Dendritic cell treated with granulocyte-macrophage colony-stimulating factor and Interleukin-4, amounts not matched to agents 40 ng/mL and 50 ng/mL, for 4 days (primary cell): ENCODE measurements at regions of chr3 and their contacts with region 1.

Region 1: DNA sequence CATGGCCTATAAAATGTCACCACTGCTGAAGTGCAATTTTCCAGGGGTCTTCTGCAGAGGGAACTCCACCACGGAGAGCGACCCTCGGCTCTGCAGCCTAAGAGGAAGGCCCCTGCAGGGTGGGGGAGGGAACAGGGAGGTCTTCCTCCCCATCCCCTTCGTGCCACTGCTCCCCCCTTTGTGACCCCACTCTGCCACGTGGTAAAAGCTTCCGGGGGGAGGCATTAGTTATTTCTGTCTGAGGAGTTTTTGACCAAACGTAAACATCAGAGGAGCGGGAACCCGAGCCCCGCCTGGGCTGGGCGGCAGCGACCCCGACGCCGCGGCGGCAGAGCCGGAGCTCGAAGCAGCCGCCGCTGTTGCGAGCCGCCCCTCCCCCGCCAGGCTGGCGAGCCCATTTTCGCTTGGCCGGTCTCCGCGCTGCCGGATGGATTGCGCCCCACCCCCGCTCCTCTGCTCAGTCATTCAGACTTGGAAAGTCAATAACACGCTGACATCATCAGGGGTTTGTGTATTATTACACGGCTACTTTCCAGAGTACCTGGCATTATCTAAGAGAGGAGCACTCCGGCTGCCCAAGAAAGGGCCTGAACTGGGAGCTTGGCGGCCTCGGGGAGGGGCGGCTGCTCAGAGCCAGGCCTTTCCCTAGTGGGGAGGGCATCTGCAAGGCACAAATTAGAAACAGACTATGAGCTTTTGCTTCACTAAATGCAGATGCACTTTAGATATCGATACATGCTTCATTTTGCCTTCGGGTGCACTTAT is 162.5 kb upstream of the TBL1XR1 start:
- H3K4me3 Mint-ChIP-seq: peak overlapping the region; percentile 76
- H3K27ac Mint-ChIP-seq: peak overlapping the region; percentile 98
- H3K4me1 Mint-ChIP-seq: peaks cover 64% of the 10 kb centered on the region
- H3K27me3 Mint-ChIP-seq: no peaks in the 10 kb centered on the region

Region 2: DNA sequence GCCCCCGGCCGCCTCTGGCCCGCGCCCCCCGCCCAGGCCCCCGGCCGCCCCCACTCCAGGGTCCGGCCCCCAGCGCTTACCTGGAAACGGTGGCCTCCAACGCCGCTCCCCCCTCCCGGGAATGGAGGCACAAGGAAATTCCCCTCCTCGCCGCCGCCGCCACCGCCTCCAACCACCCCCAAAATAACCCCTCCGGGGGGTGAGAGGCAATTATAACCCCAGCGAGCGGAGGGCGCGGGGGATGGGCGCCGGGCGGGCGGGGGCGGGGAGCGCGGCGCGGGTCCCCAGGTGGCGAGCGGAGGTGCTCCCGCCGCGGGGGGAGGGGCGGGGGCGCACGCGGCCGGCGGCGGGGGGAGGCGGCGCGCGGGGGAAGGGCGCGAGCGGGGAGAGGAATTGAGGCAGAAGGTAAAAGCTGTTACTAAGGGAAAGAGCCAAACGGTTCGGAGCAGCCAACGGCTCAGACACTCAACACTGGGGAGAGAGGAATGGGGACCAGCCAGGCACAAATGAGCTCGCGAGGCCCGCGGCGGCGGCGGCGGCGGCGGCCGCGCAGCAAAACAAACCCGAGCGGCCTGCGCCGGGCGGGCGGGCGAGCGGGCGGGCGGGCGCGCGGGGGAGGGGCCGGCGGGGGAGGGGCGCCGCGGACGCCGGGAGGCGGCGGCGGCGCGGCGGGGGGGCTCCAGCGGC is 162.6 kb before region 1 on chr3 and contains the start of gene TBL1XR1:
- intact Hi-C with region 1: loop called (anchors 1 kb)
- H3K4me3 Mint-ChIP-seq: peak within 1 kb of the TSS; percentile 94
- H3K27ac Mint-ChIP-seq: peak within 1 kb of the TSS; percentile 99
- H3K4me1 Mint-ChIP-seq: peaks cover 40% of the 10 kb centered on the region
- H3K27me3 Mint-ChIP-seq: no peaks in the 10 kb centered on the region

Region 3: DNA sequence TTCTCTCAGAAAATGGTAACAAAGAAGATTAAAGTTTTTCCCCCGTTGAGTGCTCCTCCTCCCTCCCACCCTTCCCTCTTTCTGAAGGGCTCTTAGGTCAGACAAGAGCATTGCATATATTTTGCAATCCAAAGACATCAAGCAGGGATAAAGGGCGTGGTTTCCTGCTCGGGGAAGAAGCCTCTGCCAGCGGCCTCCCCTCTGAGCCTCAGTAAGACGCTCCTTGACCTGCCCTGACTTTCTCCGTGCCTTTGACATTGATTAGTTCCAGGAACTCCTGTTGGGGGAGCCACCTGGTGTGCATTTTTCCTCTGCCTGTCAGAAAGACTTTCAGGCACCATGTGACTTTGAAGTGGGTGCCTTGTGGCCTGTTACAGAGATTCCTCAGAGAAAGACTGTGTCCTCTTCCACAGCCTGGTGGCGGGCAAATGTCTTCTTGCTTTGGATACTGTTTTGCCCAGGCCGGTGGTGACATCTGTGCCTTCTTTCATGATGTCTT is 75.3 kb before region 1 on chr3:
- intact Hi-C with region 1: loop called (anchors 10 kb)
- H3K4me3 Mint-ChIP-seq: no peak overlapping the region
- H3K27ac Mint-ChIP-seq: peak overlapping the region; percentile 86
- H3K4me1 Mint-ChIP-seq: peaks cover 52% of the 10 kb centered on the region
- H3K27me3 Mint-ChIP-seq: no peaks in the 10 kb centered on the region

Region 4: DNA sequence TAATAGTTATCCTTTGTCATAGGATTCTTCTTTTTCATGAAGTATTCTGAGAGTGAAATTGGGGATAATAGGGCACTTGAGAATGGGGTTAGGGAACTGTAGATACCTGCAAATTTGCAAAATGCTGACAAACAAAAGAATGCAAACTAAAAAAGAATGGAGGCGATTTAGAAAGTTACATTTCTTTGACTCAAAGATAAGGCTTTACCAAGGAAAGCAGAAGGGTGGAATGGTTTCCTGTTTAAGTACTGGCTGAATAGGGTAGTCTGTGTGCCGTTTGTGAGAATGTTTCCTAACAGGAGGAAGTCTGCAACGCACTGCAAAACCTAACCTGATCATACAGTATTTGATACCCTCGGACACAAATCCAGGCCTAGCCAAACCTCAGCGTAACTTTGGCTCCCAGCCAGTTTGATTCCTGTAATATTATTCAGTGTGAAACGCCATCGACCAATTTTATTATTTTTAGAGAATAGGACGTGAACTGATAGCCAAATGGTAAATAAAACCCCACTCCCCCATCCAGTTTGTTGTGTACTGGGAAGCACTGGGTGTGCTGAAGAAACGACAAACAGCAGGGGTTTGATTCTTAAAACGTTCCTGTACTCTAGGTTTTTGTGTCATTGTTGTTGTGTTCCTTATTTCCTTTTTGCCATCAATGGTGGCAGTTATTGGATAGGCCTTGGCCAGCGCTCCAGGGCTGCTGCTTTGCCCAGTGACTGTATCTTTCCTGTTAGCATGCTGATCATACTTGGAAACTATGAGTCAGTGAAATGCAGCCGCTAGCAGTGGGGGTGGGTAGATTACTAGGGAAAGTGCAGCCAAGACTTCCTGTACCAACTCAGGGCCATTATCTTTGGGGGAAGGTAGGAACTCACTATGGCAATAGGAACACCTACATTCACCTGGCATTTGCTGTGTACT is 14.5 kb before region 1 on chr3:
- intact Hi-C with region 1: loop called (anchors 1 kb)
- H3K4me3 Mint-ChIP-seq: peak overlapping the region; percentile 13
- H3K27ac Mint-ChIP-seq: peak overlapping the region; percentile 92
- H3K4me1 Mint-ChIP-seq: peaks cover 45% of the 10 kb centered on the region
- H3K27me3 Mint-ChIP-seq: no peaks in the 10 kb centered on the region

Region 5: GRCh38 chr3:177396716-177397115 is 36.9 kb after region 1 on chr3:
- intact Hi-C with region 1: no loop called
- H3K4me3 Mint-ChIP-seq: no peak overlapping the region
- H3K27ac Mint-ChIP-seq: no peak overlapping the region
- H3K4me1 Mint-ChIP-seq: no peaks in the 10 kb centered on the region
- H3K27me3 Mint-ChIP-seq: no peaks in the 10 kb centered on the region

Region 6: GRCh38 chr3:177589911-177590381 is 230.2 kb after region 1 on chr3:
- intact Hi-C with region 1: loop called (anchors 5 kb)
- H3K4me3 Mint-ChIP-seq: no peak overlapping the region
- H3K27ac Mint-ChIP-seq: peak overlapping the region; percentile 91
- H3K4me1 Mint-ChIP-seq: peaks cover 50% of the 10 kb centered on the region
- H3K27me3 Mint-ChIP-seq: no peaks in the 10 kb centered on the region